ENCODE measurements at regions of chr6 and their contacts with region 1.

Region 1: GRCh38 chr6:46848684-46849360 is 55.6 kb downstream of the MEP1A start:
- DNase-seq: peak; percentile 92

Region 2: GRCh38 chr6:46862381-46862780 is 13.6 kb after region 1 on chr6:
- intact Hi-C with region 1: no loop called
- DNase-seq: no peak

Region 3: GRCh38 chr6:46993846-46994245 is 145.0 kb after region 1 on chr6:
- intact Hi-C with region 1: loop called (anchors 1 kb)
- DNase-seq: no peak

Region 4: DNA sequence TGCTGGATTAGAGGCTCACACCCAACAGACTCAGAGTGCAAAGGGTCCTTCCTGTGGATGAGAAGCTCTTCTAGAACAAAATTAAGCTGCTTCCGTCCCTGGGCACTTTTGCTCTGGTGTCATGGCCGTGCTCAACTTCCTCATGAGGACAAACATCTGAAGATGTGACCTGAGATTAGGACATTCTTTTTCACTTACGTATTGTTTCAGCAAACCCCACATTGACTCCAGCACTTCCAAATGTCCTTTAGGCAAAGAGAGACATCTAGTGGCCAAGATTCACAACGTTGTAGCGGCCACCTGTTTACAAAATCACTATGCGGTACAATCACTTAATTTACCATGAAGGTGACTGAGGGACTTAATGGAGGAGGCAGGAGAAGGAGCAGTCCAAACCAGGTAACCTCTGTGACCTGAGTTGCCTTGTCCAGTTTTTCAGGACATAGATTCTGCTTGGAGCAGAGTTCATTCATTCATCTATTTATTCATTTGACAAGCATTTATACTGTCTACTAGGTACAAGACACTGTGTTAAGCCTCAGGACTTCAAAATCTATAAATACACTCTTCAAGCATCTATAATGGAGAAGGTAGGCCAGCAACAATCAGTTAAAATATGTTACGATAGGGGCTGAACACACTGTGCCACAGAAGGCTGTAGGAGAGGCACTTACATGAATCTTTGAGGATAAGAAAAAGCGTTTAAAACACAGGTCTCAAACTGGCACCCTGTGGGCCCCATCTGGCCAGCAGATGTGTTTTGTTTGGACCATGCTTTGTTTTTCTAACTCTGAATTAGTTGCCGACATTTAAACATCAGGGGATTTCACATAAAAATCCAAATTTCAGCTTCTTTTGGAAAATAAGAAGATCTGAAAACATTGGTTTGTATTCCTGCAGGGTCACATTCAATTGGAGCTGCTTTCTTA is 198.9 kb after region 1 on chr6:
- intact Hi-C with region 1: loop called (anchors 2 kb)
- DNase-seq: no peak

Region 5: GRCh38 chr6:47309291-47310130 is 460.7 kb after region 1 on chr6 and contains the start of gene TNFRSF21:
- intact Hi-C with region 1: loop called (anchors 5 kb)
- DNase-seq: peak; percentile 93
- total RNA-seq, gene TNFRSF21: 3.5 TPM

Region 6: DNA sequence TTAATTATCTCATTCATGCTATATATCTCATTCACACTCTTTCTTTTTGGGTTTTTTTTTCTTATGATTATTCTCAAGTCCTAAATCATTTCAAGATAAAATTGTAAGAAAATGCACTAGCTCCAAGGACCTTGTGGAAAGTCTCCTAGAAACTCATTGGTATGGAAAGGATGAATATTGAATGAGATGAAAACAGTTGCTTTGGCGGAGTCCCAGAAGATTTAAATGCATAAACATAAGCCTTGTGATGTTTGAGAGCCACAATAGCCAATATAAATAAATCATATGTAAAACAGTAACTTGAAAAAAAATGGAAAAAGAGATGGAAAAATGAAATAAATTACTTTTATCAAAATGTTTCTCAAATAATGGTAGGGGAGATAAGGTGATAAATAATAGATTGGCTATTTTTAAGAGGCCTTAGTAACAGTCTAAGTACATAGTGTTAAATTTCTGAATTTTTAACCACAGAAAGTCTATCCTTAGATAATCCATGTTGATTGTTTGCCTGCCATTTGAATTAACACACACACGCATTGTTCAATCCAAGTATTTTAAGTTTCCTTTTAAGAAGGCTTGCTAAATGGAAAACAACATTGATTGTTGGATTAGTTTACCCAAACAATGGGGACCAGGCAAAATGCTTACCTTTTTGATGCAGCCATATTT is 547.7 kb after region 1 on chr6:
- intact Hi-C with region 1: no loop called
- DNase-seq: no peak